Psoas muscle (tissue), 8 donors: ENCODE measurements at regions of chr7 and their contacts with region 1.

Region 1: DNA sequence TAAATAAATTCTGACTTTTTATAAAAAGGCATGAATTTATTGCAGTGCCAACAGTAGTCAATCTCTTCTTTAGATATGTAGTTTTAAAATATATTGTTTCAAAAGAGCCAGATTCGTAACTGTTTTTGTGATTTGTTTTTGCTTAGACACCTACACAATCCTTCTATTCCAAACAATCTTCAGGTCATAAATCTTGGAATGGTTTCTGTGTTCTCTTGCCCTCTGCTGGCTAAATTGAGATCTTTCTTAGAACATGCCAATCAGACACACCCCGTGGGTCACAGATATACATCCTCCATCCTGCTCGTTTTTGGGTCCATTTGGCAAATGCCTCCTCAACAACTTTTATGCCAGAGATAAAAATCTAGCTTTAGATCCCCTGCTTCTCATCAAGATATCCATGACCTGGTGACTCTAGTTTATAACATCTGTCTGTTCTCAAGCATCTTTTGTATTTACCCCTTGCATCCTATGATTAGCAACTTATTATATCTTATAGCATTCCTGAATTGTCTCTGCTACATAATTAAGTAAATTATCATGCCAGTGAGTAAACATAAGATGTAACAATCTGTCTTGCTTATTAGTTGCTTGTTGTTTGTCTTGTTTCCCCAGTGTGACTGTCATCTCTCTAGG is 35.3 kb upstream of the IFRD1 start:
- DNase-seq: no peak
- ATAC-seq: peak; percentile 58 to 90 (median 74)
- H3K4me3 ChIP-seq: no peak overlapping the region
- H3K27ac ChIP-seq: no peak overlapping the region
- H3K4me1 ChIP-seq: no peaks in the 10 kb centered on the region
- H3K27me3 ChIP-seq: no peaks in the 10 kb centered on the region
- CTCF ChIP-seq: peak; percentile 66

Region 2: GRCh38 chr7:111741811-111742240 is 673.1 kb before region 1 on chr7:
- intact Hi-C with region 1: loop called in 1 of 2 experiments (anchors 5 kb)
- DNase-seq: no peak
- ATAC-seq: peak; percentile 68 to 83 (median 72)
- H3K4me3 ChIP-seq: no peak overlapping the region
- H3K27ac ChIP-seq: no peak overlapping the region
- H3K4me1 ChIP-seq: no peaks in the 10 kb centered on the region
- H3K27me3 ChIP-seq: no peaks in the 10 kb centered on the region
- CTCF ChIP-seq: peak; percentile 64

Region 3: DNA sequence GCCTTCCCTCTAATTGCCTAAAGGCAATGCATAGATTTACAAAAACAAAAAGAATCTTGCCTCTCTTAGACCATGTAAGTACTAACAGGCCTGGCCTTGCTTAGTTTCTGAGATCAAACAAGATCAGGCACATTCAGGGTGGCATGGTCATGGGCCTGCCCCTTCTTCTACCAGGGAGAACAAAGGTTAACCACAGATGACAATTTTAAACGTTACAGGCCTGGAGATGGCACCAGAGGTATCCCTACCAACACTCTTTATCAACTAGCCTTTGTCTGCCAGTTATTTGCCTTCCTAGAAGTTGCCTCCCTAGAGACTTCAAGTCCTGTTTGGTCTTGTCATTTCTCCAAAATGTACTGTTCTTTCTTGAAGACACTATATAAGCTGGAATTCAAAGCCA is 461.4 kb before region 1 on chr7:
- intact Hi-C with region 1: loop called (anchors 5 kb)
- DNase-seq: no peak
- ATAC-seq: peak; percentile 85 to 88 (median 88)
- H3K4me3 ChIP-seq: no peak overlapping the region
- H3K27ac ChIP-seq: no peak overlapping the region
- H3K4me1 ChIP-seq: peaks cover 8% of the 10 kb centered on the region
- H3K27me3 ChIP-seq: no peaks in the 10 kb centered on the region
- CTCF ChIP-seq: peak; percentile 30

Region 4: GRCh38 chr7:113292105-113292504 is 877.1 kb after region 1 on chr7:
- intact Hi-C with region 1: no loop called
- DNase-seq: no peak
- ATAC-seq: no peak
- H3K4me3 ChIP-seq: no peak overlapping the region
- H3K27ac ChIP-seq: no peak overlapping the region
- H3K4me1 ChIP-seq: no peaks in the 10 kb centered on the region
- H3K27me3 ChIP-seq: no peaks in the 10 kb centered on the region
- CTCF ChIP-seq: no peak